ENCODE measurements at regions of chr5 and their contacts with region 1.

Region 1: GRCh38 chr5:159139802-159140201 is 40.1 kb upstream of the EBF1 start:
- DNase-seq: no peak
- H3K4me3 ChIP-seq: no peak overlapping the region
- H3K27ac ChIP-seq: no peak overlapping the region
- H3K4me1 ChIP-seq: no peaks in the 10 kb centered on the region
- H3K27me3 ChIP-seq: no peaks in the 10 kb centered on the region
- CTCF ChIP-seq: no peak

Region 2: DNA sequence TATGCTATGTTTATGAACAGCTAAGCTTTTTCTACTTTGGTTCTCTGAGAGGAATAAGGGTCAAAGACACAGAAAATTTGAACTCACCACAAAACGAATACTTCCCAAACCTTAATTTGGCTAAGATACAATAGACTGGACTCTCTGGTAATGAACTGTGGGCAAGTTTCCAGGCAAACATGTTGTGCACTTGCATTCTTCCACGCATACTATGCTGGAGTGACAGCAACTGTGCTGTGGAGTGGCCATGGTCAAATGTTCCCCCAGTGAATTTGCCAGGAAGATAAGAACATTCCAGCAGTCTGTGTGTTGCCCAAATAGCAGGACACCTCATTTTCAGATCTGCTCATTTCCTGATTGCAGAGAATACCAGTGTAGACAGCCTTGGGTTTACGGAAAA is 465.8 kb after region 1 on chr5:
- CTCF ChIA-PET with region 1: no interaction called
- POLR2A ChIA-PET with region 1: interaction called, 12 read pairs
- intact Hi-C with region 1: no loop called
- DNase-seq: no peak
- H3K4me3 ChIP-seq: no peak overlapping the region
- H3K27ac ChIP-seq: no peak overlapping the region
- H3K4me1 ChIP-seq: no peaks in the 10 kb centered on the region
- H3K27me3 ChIP-seq: no peaks in the 10 kb centered on the region
- CTCF ChIP-seq: no peak

Measured in A673 (cell line).